ENCODE measurements at regions of chr2 and their contacts with region 1.

Region 1: DNA sequence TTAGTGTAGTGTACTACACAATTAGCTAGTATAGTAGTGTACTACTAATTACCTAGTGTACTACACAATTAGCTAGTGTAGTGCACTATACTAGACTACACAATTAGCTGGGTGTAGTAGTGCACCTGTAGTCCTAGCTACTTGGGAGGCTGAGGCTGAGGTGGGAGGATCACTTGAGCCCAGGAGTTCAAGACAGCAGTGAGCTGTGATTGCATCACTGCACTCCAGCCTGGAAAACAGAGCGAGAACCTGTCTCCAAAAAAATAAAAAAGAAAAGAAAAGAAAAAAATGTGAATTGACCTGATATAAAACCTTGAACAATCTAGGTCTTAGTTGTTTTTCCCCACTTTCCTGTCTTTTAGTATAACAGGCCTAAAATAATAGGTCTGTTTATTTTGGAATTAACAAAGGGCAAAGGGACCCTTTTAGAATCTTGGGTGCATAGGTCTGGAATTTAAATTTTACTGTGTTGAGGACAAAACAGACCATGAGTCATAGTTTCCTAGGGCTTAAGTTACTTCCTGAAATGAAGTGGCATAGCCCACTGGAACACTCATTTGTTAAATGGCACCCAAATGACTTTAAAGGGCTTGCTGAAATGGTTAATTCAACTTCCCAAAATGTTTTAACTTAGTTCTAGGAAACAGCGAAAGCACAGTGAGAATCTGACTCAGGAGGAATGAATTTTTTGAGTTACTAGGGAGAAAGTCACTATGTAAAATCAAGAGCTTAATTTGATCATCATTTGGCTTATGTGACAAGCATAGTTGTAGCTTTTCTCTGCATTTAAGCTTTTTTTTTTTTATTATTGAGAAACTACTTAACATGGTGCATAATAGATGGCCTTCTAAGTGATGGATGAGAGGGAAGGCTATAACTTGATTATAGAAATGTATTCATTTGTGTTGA is 50.7 kb upstream of the ARL5A start:
- DNase-seq: no peak
- ATAC-seq: peak in 3 of 4 donors; percentile 42 to 68 (median 58)
- H3K4me3 ChIP-seq: no peak overlapping the region
- H3K27ac ChIP-seq: peak overlapping the region in 4 of 12 donors; percentile 8 to 53 (median 34)
- H3K4me1 ChIP-seq: peaks cover 0 to 18% (median 3%) of the 10 kb centered on the region in 12 donors
- H3K27me3 ChIP-seq: no peaks in the 10 kb centered on the region
- CTCF ChIP-seq: no peak
- POLR2A ChIP-seq: no peak

Region 2: DNA sequence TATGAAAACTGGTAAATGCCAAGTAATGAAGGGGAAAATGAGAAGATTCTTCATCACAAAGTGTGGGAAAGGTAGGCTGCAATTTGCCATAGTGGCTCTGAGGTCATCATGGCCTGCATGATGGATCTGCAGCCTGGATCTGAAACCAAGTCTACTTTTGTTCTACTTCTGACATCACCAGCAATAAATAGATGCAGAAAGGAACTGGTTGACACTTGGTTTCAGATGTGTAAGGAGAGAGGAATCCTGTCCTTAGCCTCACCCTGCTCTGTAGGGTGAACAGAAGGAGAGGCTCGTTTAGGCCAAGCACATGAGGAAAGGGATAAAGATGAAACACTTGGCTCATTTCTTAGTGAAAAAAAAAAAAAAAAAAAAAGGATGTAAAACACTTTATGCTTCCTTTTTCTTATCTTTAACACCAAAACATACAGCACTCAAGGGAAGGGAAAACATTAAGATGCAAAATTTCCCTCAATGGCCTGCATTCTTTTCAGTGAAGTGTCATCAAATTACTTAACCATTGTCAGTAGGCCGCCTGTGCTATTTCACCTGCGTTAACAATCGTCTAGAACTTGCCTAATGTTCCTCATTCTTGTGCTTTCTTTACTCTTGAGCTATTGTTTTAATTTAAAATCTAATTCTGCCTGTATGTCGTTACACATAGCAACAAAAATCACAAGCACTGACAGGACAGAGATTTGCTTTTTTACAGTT is 148.5 kb before region 1 on chr2:
- intact Hi-C with region 1: no loop called
- DNase-seq: no peak
- ATAC-seq: peak in 2 of 4 donors; percentile 29 to 61
- H3K4me3 ChIP-seq: no peak overlapping the region
- H3K27ac ChIP-seq: no peak overlapping the region
- H3K4me1 ChIP-seq: peaks cover 0 to 4% (median 0%) of the 10 kb centered on the region in 12 donors
- H3K27me3 ChIP-seq: no peaks in the 10 kb centered on the region
- CTCF ChIP-seq: no peak
- POLR2A ChIP-seq: no peak

Region 3: DNA sequence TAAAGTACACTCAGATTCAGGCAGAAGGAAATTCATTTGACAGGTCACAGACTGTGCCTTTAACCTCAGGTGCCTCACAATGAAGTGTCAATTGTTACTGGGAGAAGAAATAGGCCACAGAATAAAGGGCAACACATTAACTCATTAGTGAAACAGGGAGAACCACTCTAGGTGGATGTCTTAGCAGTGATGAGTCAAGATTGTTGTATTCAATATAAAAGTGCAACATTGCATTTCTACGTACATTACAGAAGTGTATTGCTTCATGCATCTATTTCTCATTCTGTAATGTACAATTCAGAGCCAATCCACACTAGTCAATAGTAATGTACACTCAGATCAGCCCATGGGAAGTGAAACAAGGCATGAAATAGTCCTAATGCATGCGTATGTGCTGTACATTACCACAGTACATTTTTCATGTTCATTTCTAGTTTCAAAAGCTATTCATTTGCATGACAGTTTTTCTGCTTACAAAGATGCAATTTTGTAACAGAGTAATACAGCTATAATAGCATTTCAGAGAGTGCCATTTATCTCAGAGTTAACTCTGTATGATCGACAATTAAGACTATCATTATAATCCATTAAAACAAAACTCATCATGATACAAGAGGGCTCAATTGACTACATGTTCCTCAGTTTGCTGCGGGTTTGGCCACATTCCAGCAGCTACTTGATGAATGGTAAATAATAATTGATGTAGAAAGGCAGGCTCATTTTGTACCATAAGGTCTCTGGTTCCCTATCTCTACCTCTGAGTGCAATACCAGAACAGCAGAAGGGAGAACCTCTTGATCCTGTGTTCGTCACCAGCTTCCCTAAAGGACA is 38.5 kb before region 1 on chr2:
- intact Hi-C with region 1: loop called in 1 of 10 experiments (anchors 5 kb)
- DNase-seq: no peak
- ATAC-seq: peak in 1 of 4 donors; percentile 24
- H3K4me3 ChIP-seq: no peak overlapping the region
- H3K27ac ChIP-seq: no peak overlapping the region
- H3K4me1 ChIP-seq: peaks cover 0 to 29% (median 24%) of the 10 kb centered on the region in 12 donors
- H3K27me3 ChIP-seq: no peaks in the 10 kb centered on the region
- CTCF ChIP-seq: no peak
- POLR2A ChIP-seq: no peak

Region 4: DNA sequence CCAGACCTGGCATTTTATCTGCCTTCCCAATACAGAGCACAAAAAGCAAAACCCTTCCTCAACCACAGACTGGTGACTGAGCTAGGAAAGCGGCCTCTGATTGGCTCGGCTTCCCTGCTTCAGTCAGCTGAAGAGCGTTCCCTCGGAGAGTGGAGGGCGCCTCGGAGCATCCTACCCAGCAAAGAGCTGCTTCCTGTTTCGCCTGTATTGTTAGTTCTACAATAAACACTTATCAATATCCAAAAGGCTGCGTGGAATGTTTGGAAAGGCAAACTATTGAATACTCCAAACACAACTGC is 94.9 kb after region 1 on chr2:
- intact Hi-C with region 1: loop called in 1 of 10 experiments (anchors 10 kb)
- DNase-seq: peak in 1 of 5 donors; percentile 26
- ATAC-seq: peak in 3 of 4 donors; percentile 26 to 69 (median 49)
- H3K4me3 ChIP-seq: peak overlapping the region in 4 of 12 donors; percentile 9 to 35 (median 21)
- H3K27ac ChIP-seq: no peak overlapping the region
- H3K4me1 ChIP-seq: no peaks in the 10 kb centered on the region
- H3K27me3 ChIP-seq: no peaks in the 10 kb centered on the region
- CTCF ChIP-seq: no peak
- POLR2A ChIP-seq: no peak

Measured in heart left ventricle (tissue), 16 donors.